ENCODE measurements at regions of chrX and their contacts with region 1.

Region 1: GRCh38 chrX:107627838-107628661 is at the start of gene PRPS1:
- DNase-seq: peak; percentile 62 to 91 (median 86)
- ATAC-seq: peak; percentile 98
- H3K4me3 ChIP-seq: peak within 1 kb of the TSS; percentile 97
- H3K4me3 Mint-ChIP-seq: peak within 1 kb of the TSS; percentile 79 to 97 (median 94)
- H3K27ac ChIP-seq: peak within 1 kb of the TSS; percentile 86
- H3K27ac Mint-ChIP-seq: peak within 1 kb of the TSS; percentile 87 to 97 (median 92)
- H3K4me1 ChIP-seq: peaks cover 11 to 12% of the 10 kb centered on the region in 2 donors
- H3K4me1 Mint-ChIP-seq: peaks cover 2 to 40% (median 32%) of the 10 kb centered on the region in 7 donors
- H3K27me3 ChIP-seq: no peaks in the 10 kb centered on the region
- H3K27me3 Mint-ChIP-seq: no peaks in the 10 kb centered on the region
- total RNA-seq, gene PRPS1: 59.2 to 71.8 (median 62.6) TPM

Region 2: DNA sequence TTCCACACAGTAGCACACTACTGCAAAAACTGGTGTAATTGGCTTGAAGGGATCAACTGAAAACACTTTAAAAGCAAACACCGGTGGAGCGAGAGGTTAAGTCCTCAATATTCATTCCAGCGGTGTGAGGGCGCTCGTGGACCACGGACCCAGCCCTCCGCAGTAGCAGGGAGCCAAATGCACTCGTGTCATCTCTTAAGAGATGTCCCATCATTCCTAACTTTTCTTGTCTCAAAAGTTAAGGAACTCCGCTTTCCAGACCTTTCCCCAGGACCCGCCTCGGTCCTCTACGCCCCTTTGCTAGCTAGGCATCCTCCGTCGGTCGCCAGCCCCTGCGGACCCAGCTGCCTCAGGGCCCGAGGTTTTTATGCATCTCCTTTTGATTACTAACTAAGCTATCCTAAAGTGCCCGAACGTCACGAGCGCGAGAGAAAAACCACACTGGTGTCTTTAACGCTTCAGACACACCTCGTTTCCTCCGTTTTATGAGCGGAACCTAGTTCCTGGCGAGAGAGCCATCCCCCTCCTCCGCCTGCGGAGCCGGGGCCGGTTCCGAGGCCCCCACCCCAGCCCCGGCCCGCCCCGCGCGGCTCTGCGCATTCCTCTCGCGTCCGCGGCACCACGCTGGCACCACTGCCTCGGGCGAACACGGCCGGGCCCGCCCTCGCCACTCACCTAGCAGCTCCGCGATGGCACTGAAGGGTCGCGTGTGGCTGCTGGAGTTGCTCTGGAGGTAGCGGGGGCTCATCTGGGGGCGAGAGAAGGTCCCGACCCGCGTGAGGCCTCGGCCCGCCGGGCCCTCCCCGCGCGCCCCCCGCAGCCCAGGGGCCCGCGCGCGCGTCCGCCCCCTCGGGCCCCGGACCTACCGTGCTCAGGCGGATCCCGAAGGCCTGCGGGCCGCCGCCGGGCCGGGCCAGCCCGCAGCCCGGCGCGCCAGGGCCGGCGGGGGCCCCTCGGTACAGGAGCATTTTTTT is 628.8 kb before region 1 on chrX:
- CTCF ChIA-PET with region 1: no interaction called
- POLR2A ChIA-PET with region 1: interaction called, 5 read pairs
- intact Hi-C with region 1: loop called (anchors 1 to 5 kb)
- DNase-seq: peak; percentile 6 to 63 (median 49)
- ATAC-seq: peak; percentile 72
- H3K4me3 ChIP-seq: peak overlapping the region; percentile 53
- H3K4me3 Mint-ChIP-seq: peak overlapping the region; percentile 75 to 94 (median 86)
- H3K27ac ChIP-seq: peak overlapping the region; percentile 41
- H3K27ac Mint-ChIP-seq: peak overlapping the region in 8 of 9 donors; percentile 57 to 87 (median 71)
- H3K4me1 ChIP-seq: peaks cover 0 to 5% of the 10 kb centered on the region in 2 donors
- H3K4me1 Mint-ChIP-seq: peaks cover 5 to 13% (median 12%) of the 10 kb centered on the region in 7 donors
- H3K27me3 ChIP-seq: no peaks in the 10 kb centered on the region
- H3K27me3 Mint-ChIP-seq: peaks cover 0 to 2% (median 0%) of the 10 kb centered on the region in 5 donors

Region 3: DNA sequence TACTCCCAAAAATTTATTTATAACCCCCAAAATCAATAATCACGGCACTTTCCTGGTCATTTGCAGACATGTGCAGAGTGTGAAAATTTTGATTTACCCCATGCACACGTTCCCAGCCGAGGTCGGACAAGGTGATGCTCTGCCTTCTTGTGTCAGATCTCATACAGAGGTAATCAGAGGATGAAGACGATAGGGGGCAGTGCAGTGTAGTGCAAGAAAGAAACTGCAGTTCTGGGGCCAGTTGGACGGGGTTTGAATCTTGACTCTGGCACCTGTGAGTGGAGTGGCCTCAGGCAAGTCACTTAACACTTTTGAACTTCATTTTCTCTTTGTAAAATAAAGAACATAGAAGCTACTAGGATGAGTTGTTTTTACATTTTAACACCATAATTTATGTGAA is 90.2 kb before region 1 on chrX:
- CTCF ChIA-PET with region 1: no interaction called
- POLR2A ChIA-PET with region 1: no interaction called
- intact Hi-C with region 1: loop called (anchors 2 kb)
- DNase-seq: peak in 7 of 9 donors; percentile 17 to 43 (median 29)
- ATAC-seq: peak; percentile 57
- H3K4me3 ChIP-seq: no peak overlapping the region
- H3K4me3 Mint-ChIP-seq: no peak overlapping the region
- H3K27ac ChIP-seq: no peak overlapping the region
- H3K27ac Mint-ChIP-seq: no peak overlapping the region
- H3K4me1 ChIP-seq: no peaks in the 10 kb centered on the region
- H3K4me1 Mint-ChIP-seq: peaks cover 0 to 4% (median 0%) of the 10 kb centered on the region in 7 donors
- H3K27me3 ChIP-seq: no peaks in the 10 kb centered on the region
- H3K27me3 Mint-ChIP-seq: peaks cover 0 to 12% (median 6%) of the 10 kb centered on the region in 5 donors

Region 4: DNA sequence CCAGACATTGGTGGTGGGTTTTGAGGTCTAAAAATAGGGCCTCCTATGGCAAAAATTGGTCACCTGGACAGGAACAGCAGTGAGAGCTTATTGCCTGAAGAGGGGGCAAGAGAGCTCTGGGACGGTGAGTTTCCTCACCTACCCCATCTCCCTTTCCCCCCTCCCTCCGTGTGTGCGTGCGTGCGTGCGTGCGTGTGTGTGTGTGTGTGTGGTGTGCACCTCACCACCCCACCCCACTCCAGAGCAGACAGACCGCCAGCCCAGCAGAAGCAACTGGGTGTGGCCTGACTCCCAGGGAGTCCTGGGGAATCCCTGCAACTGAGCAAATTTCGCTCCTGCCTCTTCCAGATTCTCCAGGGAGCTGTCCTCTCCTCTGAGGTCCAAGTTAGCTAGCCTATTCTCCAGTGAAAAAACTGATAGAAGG is 44.9 kb after region 1 on chrX:
- CTCF ChIA-PET with region 1: no interaction called
- POLR2A ChIA-PET with region 1: interaction called, 15 read pairs
- intact Hi-C with region 1: loop called (anchors 1 kb)
- DNase-seq: peak; percentile 41 to 93 (median 88)
- ATAC-seq: peak; percentile 69
- H3K4me3 ChIP-seq: peak overlapping the region; percentile 58
- H3K4me3 Mint-ChIP-seq: peak overlapping the region; percentile 65 to 90 (median 84)
- H3K27ac ChIP-seq: peak overlapping the region; percentile 99
- H3K27ac Mint-ChIP-seq: peak overlapping the region; percentile 96 to 100 (median 98)
- H3K4me1 ChIP-seq: peaks cover 34 to 36% of the 10 kb centered on the region in 2 donors
- H3K4me1 Mint-ChIP-seq: peaks cover 14 to 72% (median 44%) of the 10 kb centered on the region in 7 donors
- H3K27me3 ChIP-seq: no peaks in the 10 kb centered on the region
- H3K27me3 Mint-ChIP-seq: no peaks in the 10 kb centered on the region

Region 5: DNA sequence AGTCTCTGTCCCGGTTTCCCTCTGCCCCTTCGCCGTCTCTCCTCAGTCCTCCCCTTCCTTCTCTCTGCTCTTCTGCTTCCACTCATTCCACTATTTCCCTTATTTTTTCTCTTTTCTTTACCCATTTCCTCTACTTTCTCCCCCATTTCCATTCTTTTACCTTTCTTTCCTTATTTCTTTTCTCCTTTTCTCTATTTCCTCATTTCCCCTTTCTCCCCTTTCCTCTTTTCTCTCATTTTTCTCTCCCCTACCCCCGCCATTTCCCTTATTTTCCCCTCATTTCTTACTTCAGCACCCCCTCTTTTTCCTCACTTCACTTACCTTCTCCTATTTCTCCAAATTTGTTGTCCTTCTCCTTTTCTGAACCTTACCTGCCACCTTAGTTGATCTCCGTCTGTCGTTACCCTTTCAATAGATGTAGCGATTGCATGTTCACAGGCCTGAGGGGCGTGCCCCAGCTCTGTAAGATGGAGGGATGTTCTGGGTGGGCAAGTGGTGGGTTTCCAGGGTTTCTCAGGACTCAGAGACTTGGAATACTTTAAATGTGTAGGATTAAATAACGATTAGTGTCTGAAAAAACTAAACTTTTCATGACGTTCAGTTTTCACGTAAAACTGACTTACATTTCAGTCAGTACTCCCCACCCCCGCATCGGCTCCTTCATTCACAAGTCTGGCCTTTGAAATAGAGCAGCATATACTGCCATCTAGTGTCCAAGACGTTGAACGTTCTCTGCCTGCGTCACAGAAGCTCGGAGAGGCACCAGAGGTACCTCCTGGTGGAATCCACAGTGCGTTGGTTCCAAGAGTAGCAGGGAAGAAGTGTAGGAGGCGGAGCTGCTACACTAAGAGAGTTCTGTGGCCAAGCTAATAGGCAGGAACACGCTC is 148.8 kb after region 1 on chrX:
- CTCF ChIA-PET with region 1: interaction called, 4 read pairs
- POLR2A ChIA-PET with region 1: interaction called, 6 read pairs
- intact Hi-C with region 1: loop called in 1 of 2 experiments (anchors 1 kb)
- DNase-seq: peak; percentile 13 to 87 (median 81)
- ATAC-seq: peak; percentile 91
- H3K4me3 ChIP-seq: peak overlapping the region; percentile 63
- H3K4me3 Mint-ChIP-seq: peak overlapping the region; percentile 80 to 96 (median 92)
- H3K27ac ChIP-seq: peak overlapping the region; percentile 64
- H3K27ac Mint-ChIP-seq: peak overlapping the region; percentile 82 to 95 (median 92)
- H3K4me1 ChIP-seq: no peaks in the 10 kb centered on the region
- H3K4me1 Mint-ChIP-seq: peaks cover 8 to 31% (median 19%) of the 10 kb centered on the region in 7 donors
- H3K27me3 ChIP-seq: no peaks in the 10 kb centered on the region
- H3K27me3 Mint-ChIP-seq: peaks cover 0 to 22% (median 0%) of the 10 kb centered on the region in 5 donors

Region 6: DNA sequence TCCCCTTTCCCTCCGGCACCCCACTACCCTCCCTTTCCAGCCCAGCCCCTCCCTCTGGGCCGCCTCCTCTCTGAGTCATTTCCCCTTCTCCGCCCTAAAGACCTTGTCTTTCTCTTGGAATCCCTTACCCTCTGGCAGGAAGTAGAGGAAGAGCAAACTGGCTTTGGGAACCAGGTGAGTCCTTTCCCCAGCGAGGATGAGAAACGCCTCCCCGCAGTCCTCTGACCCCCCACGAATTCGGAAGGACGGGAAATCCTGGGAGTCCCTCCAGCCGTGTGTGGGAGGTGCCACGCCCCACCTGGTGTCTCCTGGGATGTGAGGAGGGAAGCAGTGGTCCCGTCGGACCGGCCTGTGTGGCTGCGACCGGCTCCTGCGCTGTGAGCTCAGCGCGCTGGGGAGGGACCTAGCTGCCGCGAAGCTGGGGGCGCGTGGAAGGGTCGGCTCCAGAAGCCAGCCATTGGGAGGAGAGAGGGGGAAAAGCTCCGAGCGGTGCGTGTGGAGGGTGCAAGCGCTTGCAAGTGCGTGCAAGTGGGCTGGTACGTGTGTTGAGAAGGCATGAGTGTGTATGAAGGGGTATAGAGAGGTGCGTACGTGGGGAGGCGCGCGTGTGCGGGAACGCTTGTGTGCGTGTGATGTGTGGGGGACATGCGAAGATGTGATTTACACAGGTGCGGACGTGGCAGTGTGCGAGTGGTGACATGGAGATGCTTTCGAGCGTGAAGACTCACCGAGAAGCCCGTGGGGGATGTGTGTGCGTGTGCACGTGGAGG is 307.8 kb after region 1 on chrX:
- CTCF ChIA-PET with region 1: no interaction called
- POLR2A ChIA-PET with region 1: no interaction called
- intact Hi-C with region 1: no loop called
- DNase-seq: no peak
- ATAC-seq: no peak
- H3K4me3 ChIP-seq: no peak overlapping the region
- H3K4me3 Mint-ChIP-seq: peak overlapping the region in 5 of 10 donors; percentile 29 to 69 (median 63)
- H3K27ac ChIP-seq: no peak overlapping the region
- H3K27ac Mint-ChIP-seq: no peak overlapping the region
- H3K4me1 ChIP-seq: no peaks in the 10 kb centered on the region
- H3K4me1 Mint-ChIP-seq: peaks cover 0 to 5% (median 4%) of the 10 kb centered on the region in 7 donors
- H3K27me3 ChIP-seq: peaks cover 0 to 3% of the 10 kb centered on the region in 2 donors
- H3K27me3 Mint-ChIP-seq: peaks cover 5 to 35% (median 24%) of the 10 kb centered on the region in 5 donors

Region 7: GRCh38 chrX:108091266-108091877 is 463.3 kb after region 1 on chrX and contains the starts of genes ATG4A and PSMD10:
- CTCF ChIA-PET with region 1: no interaction called
- POLR2A ChIA-PET with region 1: no interaction called
- intact Hi-C with region 1: loop called (anchors 1 kb)
- DNase-seq: peak; percentile 65 to 91 (median 85)
- ATAC-seq: peak; percentile 97
- H3K4me3 ChIP-seq: peak within 1 kb of the TSS; percentile 85
- H3K4me3 Mint-ChIP-seq: no peak within 1 kb of the TSS
- H3K27ac ChIP-seq: peak within 1 kb of the TSS; percentile 88
- H3K27ac Mint-ChIP-seq: no peak within 1 kb of the TSS
- H3K4me1 ChIP-seq: no peaks in the 10 kb centered on the region
- H3K4me1 Mint-ChIP-seq: peaks cover 0 to 28% (median 15%) of the 10 kb centered on the region in 7 donors
- H3K27me3 ChIP-seq: no peaks in the 10 kb centered on the region
- H3K27me3 Mint-ChIP-seq: no peaks in the 10 kb centered on the region
- total RNA-seq, gene ATG4A: 6.7 to 11.4 (median 7.5) TPM
- total RNA-seq, gene PSMD10: 17.6 to 36.8 (median 22.1) TPM